ENCODE measurements at regions of chr13 and their contacts with region 1.

Region 1: DNA sequence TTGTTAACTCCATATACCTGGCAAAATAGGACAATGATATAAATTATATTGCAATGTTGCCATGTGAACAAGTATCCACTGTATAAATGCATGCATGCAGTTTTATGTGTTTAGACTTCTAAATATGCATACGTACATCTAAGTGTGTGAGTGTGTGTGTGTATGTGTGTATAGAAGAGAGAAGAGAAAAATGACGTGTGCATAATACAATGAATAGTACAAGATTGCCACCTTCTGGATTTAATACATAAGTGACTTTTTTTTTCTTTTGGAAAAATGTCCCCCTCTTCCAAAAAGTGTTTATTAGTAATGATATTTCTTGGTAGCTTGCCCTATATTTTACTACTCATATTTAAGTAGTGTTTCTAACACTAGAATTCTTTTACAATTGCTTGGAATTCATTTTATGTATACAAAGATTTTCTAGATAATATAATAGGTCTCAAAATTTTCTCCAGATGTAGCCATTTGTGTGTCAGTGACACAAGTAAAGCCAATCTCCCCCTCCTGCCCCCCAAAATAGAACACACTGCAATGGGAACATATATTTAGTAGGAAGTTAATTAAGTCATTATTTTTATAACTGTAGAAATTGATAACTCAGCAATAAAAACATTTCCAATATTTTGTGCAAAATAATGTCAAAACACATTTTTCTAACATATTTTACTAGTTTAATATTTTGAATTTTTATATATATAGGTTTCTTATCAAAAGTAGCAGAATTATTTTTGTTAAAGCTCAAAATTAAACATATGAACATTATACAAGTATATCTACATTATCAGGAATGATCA is 783.3 kb upstream of the ATXN8OS start:
- DNase-seq: no peak
- ATAC-seq: no peak

Region 2: DNA sequence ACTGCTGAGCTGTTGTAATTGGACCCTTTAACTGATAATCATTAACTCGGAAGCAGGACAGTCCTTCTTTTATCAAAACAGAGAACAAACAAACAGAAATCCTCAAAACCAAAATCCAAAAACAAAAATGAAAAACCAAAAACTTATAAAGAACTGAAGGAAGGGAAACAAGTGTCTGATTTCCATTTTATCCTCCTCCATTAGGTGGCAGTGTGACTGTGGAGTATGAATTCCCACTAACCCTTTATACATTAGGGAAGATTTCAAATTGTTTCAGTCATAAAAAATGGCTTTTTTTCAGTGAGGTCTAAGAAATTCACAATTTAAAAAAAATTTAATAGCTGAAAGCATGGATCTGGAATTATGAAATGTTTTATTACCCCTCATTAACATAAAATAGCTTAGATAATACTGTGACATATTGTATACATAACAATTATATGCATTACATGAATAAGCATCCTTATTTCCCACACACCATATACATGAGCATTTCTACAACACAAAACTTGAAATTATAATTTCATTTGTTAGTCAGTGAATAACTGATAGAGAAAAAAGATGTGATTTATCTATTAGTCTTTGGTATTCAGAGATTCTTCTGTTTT is 1019.9 kb before region 1 on chr13:
- intact Hi-C with region 1: loop called in 1 of 2 experiments (anchors 10 kb)
- DNase-seq: no peak
- ATAC-seq: no peak